Head of caudate nucleus (tissue), 42 donors: ENCODE measurements at regions of chr15 and their contacts with region 1.

Region 1: DNA sequence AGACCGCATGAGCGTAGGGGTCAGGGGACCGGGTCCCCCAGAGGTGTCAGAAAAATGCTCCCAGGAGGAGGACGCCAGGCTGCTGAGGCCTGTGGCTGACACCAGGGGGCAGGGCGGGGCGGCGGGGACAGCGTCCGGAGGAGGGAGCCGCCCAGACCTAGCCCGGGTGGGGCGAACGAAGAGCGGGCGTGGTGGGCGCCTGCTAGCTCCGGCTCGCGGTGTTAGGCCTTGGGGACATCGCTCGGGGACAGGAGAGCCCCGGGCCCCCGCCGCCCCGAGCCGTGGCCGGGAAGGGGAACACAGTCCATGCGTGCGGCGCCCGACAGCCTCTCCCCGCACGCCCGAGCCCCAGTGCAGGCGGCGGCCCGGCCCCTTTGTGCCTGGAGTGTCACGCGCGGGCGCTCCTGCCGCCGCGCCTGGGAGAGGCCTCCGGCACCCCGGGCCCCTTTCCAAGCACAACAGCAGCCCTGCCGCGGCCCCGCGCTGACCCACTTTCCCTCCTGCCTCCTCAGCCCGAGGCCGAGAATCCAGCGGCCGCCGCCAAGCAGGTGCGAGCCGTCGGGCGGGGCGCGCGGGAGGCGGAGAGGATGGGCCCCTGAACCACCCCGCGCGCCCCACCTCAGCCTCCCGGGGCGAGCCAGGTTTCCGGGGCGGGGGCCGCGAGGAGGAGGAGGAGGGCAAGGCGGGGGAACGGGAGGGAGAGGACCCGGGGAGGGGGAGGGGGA is 111.0 kb upstream of the KLF13 start:
- DNase-seq: peak in 41 of 42 donors; percentile 46 to 91 (median 79)

Region 2: GRCh38 chr15:31254431-31255175 is 39.0 kb after region 1 on chr15:
- intact Hi-C with region 1: loop called (anchors 5 kb)
- DNase-seq: peak in 1 of 42 donors; percentile 14

Region 3: GRCh38 chr15:31326156-31326732 is 110.6 kb after region 1 on chr15:
- intact Hi-C with region 1: loop called (anchors 2 kb)
- DNase-seq: peak; percentile 95 to 99 (median 99)

Region 4: DNA sequence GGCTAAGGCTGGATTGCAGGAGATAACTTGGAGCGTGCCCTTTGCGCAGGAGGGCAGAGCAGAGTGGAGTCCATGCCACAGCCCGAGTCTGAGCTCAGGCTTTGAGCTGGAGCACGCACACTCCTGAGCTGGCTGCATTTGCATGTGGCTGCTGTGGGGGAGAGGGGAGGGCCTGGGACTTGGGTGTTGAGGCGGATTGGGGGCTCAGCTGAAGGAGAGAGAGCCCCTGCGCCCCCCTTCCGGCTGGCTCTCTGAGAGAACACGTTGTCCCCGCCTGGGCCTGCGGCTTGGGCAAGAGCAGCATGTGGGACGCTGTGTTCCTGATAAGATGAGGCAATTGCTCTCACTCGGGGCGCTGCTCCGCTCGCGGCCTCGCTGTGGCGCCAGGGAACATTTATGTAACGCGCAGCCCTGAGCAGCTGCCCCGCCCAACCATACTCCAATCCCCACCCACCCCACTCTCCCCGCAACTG is 150.0 kb after region 1 on chr15:
- intact Hi-C with region 1: loop called (anchors 10 kb)
- DNase-seq: peak; percentile 84 to 97 (median 94)

Region 5: GRCh38 chr15:31435261-31435911 is 219.7 kb after region 1 on chr15:
- intact Hi-C with region 1: loop called (anchors 2 kb)
- DNase-seq: peak; percentile 57 to 92 (median 79)